HEK293 (cell line): ENCODE measurements at regions of chr16 and their contacts with region 1.

Region 1: DNA sequence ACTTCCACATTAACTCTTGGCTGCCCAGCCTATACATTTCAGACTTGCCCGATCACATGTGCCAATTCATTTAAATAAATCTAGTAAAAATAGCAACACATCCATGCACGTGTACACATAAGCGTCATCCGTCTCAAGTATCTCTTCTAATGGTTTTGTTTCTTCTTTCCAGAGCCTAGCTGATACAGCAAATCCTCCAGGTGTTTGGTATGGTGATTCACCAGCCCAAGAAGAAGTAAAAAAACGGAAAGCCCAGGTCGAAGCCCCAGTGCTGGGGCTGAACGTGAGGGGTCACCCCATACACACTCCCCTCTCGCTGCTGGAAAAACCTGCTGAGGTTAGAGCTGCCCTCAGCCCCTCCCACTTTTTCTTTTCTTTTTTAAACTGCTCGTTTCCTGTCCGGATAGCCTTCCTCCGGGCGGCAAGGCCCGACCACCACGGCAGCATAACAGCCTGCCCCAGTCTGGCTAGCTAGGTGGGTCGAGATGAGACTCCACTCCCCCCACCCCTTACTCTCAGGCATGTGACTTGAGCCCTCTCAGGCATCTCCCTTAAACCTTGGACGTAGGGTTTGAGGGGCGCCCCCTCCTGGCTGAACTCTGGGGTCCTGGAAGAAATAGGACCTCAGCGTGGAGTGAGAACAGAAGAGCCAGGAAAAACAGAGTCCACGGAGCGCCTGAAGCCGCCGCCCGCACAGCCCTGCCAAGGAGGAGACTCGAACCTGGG is 13.9 kb upstream of the OR1F1 start:
- H3K4me3 ChIP-seq: no peak overlapping the region
- H3K27ac ChIP-seq: no peak overlapping the region
- H3K4me1 ChIP-seq: no peaks in the 10 kb centered on the region
- CTCF ChIP-seq: peak; percentile 66

Region 2: GRCh38 chr16:3106205-3106928 is 67.7 kb before region 1 on chr16:
- CTCF ChIA-PET with region 1: no interaction called
- POLR2A ChIA-PET with region 1: no interaction called
- H3K4me3 ChIP-seq: peak overlapping the region; percentile 91
- H3K27ac ChIP-seq: peak overlapping the region; percentile 89
- H3K4me1 ChIP-seq: no peaks in the 10 kb centered on the region
- CTCF ChIP-seq: 0 out of 2 replicates have a peak, but pooled peaks have one; percentile 18

Region 3: DNA sequence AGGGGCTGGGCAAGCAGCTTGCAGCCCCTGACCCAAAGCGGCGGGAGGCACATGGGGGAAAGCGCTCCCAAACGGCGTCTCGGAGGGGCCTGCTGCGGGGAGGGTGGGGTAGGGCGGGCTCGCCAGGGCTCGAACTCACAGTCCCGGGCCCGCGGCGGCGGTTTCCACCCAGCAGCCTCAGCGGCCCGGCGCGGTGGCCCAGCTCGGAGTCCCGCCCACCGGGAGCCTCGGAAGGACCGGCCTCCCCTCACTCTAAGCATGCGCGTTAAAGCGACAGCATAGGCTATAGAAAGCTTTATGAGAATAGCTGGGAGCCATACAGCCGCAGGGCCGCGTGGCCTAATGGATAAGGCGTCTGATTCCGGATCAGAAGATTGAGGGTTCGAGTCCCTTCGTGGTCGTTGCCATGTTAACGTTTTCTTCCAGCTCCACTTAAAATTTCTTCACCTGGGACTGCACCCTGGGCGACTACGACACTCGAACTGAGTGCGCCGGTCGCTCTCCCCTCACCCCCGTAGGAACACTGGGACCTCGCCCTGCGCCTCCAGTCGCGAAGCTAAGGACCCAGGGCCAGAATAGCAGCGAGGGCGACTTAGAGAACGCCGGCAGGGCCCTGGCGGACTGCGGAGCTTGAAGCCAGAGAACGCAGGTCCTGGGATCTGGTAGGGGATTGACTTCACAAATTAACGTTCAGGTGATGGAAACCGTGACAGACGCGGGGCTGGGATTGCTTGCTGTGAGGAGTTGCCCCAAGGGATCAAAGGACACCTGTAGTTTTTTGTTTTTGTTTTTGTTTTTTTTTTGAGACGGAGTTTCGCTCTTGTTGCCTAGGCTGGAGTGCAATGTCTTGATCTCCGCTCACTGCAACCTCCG is 23.5 kb before region 1 on chr16:
- CTCF ChIA-PET with region 1: interaction called, 15 read pairs
- POLR2A ChIA-PET with region 1: interaction called, 16 read pairs
- H3K4me3 ChIP-seq: peak overlapping the region; percentile 59
- H3K27ac ChIP-seq: peak overlapping the region; percentile 88
- H3K4me1 ChIP-seq: no peaks in the 10 kb centered on the region
- CTCF ChIP-seq: 0 out of 2 replicates have a peak, but pooled peaks have one; percentile 16

Region 4: DNA sequence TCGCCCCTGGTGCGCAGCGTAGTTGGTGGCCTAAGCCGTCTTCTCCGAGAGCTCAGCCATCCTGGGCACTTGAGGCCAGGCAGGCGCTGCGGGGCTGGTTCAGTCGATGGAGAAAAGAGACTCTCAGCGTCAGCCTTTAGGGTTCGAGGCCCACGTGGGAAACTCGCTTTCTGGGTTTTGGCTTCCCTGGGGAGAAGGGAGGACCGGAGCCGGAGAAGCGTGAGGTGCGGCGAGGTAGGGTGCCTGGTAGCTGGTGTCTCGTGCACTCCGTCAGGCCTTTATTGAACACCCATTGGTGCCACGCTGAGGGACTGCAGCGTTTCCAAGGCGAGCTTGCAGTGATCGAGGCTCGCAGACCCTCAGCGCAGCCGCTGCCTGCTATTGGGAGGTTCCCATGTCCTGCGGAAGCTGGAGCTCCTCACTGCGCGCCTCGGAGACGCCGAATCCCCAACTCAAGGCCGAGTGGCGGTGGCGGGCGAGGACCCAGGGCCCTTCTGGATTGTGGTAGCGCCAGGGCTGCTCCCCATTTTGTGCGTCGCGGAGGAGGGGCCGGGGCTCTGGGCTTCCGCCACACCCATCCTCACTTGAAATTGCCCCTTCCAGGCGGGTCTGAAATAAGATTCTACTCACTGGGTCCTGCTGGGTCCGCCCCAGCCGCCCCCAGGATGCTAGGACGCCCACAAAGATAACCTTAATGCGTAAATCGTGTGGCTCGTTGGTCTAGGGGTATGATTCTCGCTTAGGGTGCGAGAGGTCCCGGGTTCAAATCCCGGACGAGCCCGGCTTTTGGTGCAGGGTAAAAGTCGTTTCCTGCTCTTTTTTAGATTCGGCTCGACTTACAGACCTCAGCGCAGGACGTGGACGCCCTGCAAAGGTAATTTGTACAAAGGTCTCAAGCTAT is 15.1 kb after region 1 on chr16:
- CTCF ChIA-PET with region 1: interaction called, 9 read pairs
- POLR2A ChIA-PET with region 1: interaction called, 29 read pairs
- H3K4me3 ChIP-seq: peak overlapping the region; percentile 77
- H3K27ac ChIP-seq: peak overlapping the region; percentile 74; the same call in 1 of the 2 replicates
- H3K4me1 ChIP-seq: no peaks in the 10 kb centered on the region
- CTCF ChIP-seq: 0 out of 2 replicates have a peak, but pooled peaks have one; percentile 56